CD4-positive, alpha-beta T cell (primary cell): ENCODE measurements at regions of chr17 and their contacts with region 1.

Region 1: GRCh38 chr17:48678141-48678971 is 44.0 kb downstream of the PRAC1 start:
- DNase-seq: peak; percentile 39 to 82 (median 64)
- ATAC-seq: peak; percentile 94
- H3K4me3 ChIP-seq: no peak overlapping the region
- H3K4me3 Mint-ChIP-seq: no peak overlapping the region
- H3K27ac ChIP-seq: no peak overlapping the region
- H3K27ac Mint-ChIP-seq: no peak overlapping the region
- H3K4me1 ChIP-seq: peaks cover 8% of the 10 kb centered on the region
- H3K4me1 Mint-ChIP-seq: no peaks in the 10 kb centered on the region
- H3K27me3 ChIP-seq: peaks cover 12 to 18% of the 10 kb centered on the region in 2 experiments
- H3K27me3 Mint-ChIP-seq: peaks cover 81% of the 10 kb centered on the region
- CTCF ChIP-seq: peak; percentile 98

Region 2: GRCh38 chr17:48561884-48562810 is 116.2 kb before region 1 on chr17:
- CTCF ChIA-PET with region 1: no interaction called
- POLR2A ChIA-PET with region 1: no interaction called
- intact Hi-C with region 1: no loop called
- DNase-seq: no peak
- ATAC-seq: no peak
- H3K4me3 ChIP-seq: no peak overlapping the region
- H3K4me3 Mint-ChIP-seq: no peak overlapping the region
- H3K27ac ChIP-seq: no peak overlapping the region
- H3K27ac Mint-ChIP-seq: no peak overlapping the region
- H3K4me1 ChIP-seq: peaks cover 2% of the 10 kb centered on the region
- H3K4me1 Mint-ChIP-seq: no peaks in the 10 kb centered on the region
- H3K27me3 ChIP-seq: no peaks in the 10 kb centered on the region
- H3K27me3 Mint-ChIP-seq: peaks cover 35% of the 10 kb centered on the region
- CTCF ChIP-seq: no peak

Region 3: GRCh38 chr17:49290690-49291359 is 612.5 kb after region 1 on chr17:
- CTCF ChIA-PET with region 1: no interaction called
- POLR2A ChIA-PET with region 1: no interaction called
- intact Hi-C with region 1: loop called in 1 of 2 experiments (anchors 10 kb)
- DNase-seq: peak in 5 of 14 experiments; percentile 3 to 45 (median 11)
- ATAC-seq: peak; percentile 37
- H3K4me3 ChIP-seq: no peak overlapping the region
- H3K4me3 Mint-ChIP-seq: no peak overlapping the region
- H3K27ac ChIP-seq: no peak overlapping the region
- H3K27ac Mint-ChIP-seq: no peak overlapping the region
- H3K4me1 ChIP-seq: no peaks in the 10 kb centered on the region
- H3K4me1 Mint-ChIP-seq: no peaks in the 10 kb centered on the region
- H3K27me3 ChIP-seq: no peaks in the 10 kb centered on the region
- H3K27me3 Mint-ChIP-seq: no peaks in the 10 kb centered on the region
- CTCF ChIP-seq: peak; percentile 49